ENCODE measurements at regions of chr6 and their contacts with region 1.

Region 1: GRCh38 chr6:13711733-13712598 is at the start of gene RANBP9:
- DNase-seq: no peak
- ATAC-seq: peak; percentile 96
- H3K4me3 ChIP-seq: peak within 1 kb of the TSS; percentile 71 to 77
- H3K27ac ChIP-seq: peak within 1 kb of the TSS; percentile 98
- H3K4me1 ChIP-seq: peaks cover 15% of the 10 kb centered on the region
- H3K27me3 ChIP-seq: no peaks in the 10 kb centered on the region
- CTCF ChIP-seq: peak; percentile 4; the same call in 1 of the 2 replicates
- total RNA-seq, gene RANBP9: 44.5 TPM

Region 2: DNA sequence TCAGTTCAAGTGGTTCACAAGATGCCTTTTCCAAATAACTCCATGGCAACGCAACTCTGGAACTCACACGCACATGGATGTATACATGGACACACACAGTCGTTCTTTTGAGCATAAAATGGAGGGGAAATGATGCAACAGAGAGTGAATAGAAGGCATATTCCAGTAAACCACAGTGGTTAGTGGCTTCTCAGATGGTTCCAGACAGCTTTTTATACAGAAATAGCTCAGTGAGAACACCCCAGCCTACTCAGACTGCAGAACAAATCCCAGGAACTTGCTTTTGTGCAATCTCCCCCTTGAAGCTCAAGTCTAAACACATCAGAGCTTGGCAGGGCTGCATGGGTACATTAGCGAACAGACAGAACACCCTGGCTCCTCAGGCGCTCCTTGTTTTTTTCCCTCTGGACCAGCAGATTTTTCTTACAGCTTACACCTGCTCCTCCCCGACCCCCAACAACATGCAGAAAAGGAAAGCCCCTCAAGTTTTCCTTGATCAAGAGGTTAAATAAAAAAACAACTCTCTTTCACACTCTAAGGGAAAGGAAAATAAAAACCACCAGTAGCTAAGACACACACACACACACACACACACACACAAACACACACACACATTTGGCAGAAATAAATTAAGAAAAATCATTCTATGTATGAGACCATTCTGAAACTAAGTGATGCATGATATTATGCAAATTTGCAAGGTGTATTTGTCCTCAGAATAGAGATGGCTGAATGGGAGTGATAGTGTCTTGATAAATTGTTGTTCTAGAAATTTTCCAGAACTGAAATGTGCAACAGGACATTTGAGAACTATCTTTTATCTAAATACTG is 50.9 kb after region 1 on chr6:
- CTCF ChIA-PET with region 1: interaction called, 11 read pairs
- POLR2A ChIA-PET with region 1: no interaction called
- in situ Hi-C with region 1: no loop called
- intact Hi-C with region 1: no loop called
- DNase-seq: no peak
- ATAC-seq: no peak
- H3K4me3 ChIP-seq: no peak overlapping the region
- H3K27ac ChIP-seq: no peak overlapping the region
- H3K4me1 ChIP-seq: no peaks in the 10 kb centered on the region
- H3K27me3 ChIP-seq: no peaks in the 10 kb centered on the region
- CTCF ChIP-seq: no peak

Measured in Panc1 (cell line).